CD4-positive, alpha-beta memory T cell (primary cell): ENCODE measurements at regions of chr4 and their contacts with region 1.

Region 1: DNA sequence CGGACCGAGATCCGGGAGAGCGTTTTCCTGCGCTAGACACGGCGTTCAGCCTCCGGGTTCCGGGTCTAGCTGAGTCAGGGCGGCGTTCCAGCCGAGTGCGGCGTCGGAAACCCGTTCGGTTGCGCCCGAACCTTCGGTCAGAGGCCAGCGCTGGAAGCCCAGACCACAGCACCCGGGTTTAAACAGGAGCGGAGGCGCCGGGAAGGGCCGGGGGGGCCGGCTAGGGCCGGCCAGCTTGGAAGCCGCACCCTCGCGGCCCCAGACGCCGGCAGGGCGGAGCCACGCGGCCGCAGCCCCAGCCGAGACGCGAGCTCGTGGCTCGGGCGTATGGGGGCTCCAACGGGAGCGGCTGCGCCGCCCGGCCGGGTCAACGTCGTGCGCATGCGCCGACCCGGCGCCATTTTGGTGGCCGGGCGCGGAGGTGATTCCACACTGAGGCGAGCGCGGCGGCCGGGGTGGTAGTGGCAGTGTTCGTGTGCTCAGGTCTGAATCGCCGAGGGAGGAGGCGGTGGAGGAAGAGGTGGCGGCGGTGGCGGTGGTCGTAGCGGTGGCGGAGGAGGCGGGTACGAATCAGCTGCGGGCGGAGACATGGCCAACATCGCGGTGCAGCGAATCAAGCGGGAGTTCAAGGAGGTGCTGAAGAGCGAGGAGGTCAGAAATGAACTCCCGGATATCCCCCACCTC is at the start of gene UBE2K:
- DNase-seq: peak; percentile 86 to 93 (median 91)
- H3K4me3 ChIP-seq: peak within 1 kb of the TSS; percentile 79 to 93
- H3K4me3 Mint-ChIP-seq: peak within 1 kb of the TSS; percentile 96 to 100 (median 98)
- H3K27ac ChIP-seq: peak within 1 kb of the TSS; percentile 88
- H3K27ac Mint-ChIP-seq: peak within 1 kb of the TSS; percentile 94 to 100 (median 99)
- H3K4me1 ChIP-seq: peaks cover 50% of the 10 kb centered on the region
- H3K4me1 Mint-ChIP-seq: peaks cover 27 to 54% (median 37%) of the 10 kb centered on the region in 4 donors
- H3K27me3 ChIP-seq: no peaks in the 10 kb centered on the region
- H3K27me3 Mint-ChIP-seq: no peaks in the 10 kb centered on the region
- total RNA-seq, gene UBE2K: 45.0 to 51.2 TPM

Region 2: DNA sequence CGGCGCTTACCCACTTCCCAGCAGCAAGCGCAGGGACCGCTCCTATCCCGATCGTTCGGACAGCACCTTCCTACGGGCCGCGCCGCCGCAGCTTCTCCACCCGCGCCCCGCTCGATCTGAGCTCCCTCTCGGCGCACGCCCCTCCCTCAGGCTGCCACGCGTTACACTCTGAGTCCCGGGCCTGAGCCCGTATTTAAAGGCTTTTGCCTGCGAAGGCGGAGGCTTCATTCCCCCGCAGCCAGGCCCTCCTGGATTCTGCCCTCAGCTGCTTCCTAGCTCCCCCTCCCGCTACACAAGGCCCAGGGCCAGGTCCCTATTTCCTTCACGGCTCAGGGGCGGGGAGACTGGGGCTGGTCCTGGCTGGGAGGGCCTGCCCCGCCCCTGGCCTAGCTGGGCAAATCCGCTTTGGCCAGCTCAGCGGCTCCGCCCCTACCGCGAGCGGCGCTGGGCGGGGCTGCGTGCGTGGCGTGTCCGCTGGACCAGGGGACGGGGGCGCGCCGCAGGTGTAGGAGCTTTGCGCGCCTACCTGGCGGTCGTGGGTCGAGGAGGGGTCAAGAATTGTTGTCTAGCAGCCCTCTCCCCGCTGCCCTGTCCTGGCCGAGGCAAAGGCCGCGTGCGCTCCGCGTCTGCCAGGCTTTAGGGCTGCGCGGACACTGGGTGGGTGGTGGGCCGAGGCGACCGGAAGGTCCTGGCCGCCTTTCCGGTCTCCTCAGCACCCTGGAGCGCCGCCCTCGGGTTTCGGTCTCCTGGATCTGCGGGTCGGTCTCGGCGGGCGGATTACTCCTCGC is 170.4 kb before region 1 on chr4 and contains the start of gene UGDH:
- CTCF ChIA-PET with region 1: no interaction called
- POLR2A ChIA-PET with region 1: interaction called, 11 read pairs
- intact Hi-C with region 1: loop called (anchors 1 kb)
- DNase-seq: peak; percentile 88 to 92 (median 90)
- H3K4me3 ChIP-seq: peak within 1 kb of the TSS; percentile 71 to 91
- H3K4me3 Mint-ChIP-seq: peak within 1 kb of the TSS; percentile 97 to 99 (median 98)
- H3K27ac ChIP-seq: peak within 1 kb of the TSS; percentile 69
- H3K27ac Mint-ChIP-seq: peak within 1 kb of the TSS; percentile 78 to 98 (median 96)
- H3K4me1 ChIP-seq: peaks cover 18% of the 10 kb centered on the region
- H3K4me1 Mint-ChIP-seq: peaks cover 10 to 25% (median 18%) of the 10 kb centered on the region in 4 donors
- H3K27me3 ChIP-seq: no peaks in the 10 kb centered on the region
- H3K27me3 Mint-ChIP-seq: no peaks in the 10 kb centered on the region
- total RNA-seq, gene UGDH: 21.6 to 26.5 TPM

Region 3: GRCh38 chr4:39638354-39639240 is 59.3 kb before region 1 on chr4 and contains the start of gene SMIM14:
- CTCF ChIA-PET with region 1: interaction called, 7 read pairs
- POLR2A ChIA-PET with region 1: interaction called, 15 read pairs
- intact Hi-C with region 1: loop called (anchors 2 kb)
- DNase-seq: peak; percentile 84 to 91 (median 86)
- H3K4me3 ChIP-seq: peak within 1 kb of the TSS; percentile 52 to 95
- H3K4me3 Mint-ChIP-seq: peak within 1 kb of the TSS; percentile 87 to 99 (median 92)
- H3K27ac ChIP-seq: peak within 1 kb of the TSS; percentile 77
- H3K27ac Mint-ChIP-seq: peak within 1 kb of the TSS; percentile 74 to 98 (median 96)
- H3K4me1 ChIP-seq: peaks cover 27% of the 10 kb centered on the region
- H3K4me1 Mint-ChIP-seq: peaks cover 20 to 54% (median 32%) of the 10 kb centered on the region in 4 donors
- H3K27me3 ChIP-seq: no peaks in the 10 kb centered on the region
- H3K27me3 Mint-ChIP-seq: no peaks in the 10 kb centered on the region
- total RNA-seq, gene SMIM14: 15.5 to 19.4 TPM

Region 4: DNA sequence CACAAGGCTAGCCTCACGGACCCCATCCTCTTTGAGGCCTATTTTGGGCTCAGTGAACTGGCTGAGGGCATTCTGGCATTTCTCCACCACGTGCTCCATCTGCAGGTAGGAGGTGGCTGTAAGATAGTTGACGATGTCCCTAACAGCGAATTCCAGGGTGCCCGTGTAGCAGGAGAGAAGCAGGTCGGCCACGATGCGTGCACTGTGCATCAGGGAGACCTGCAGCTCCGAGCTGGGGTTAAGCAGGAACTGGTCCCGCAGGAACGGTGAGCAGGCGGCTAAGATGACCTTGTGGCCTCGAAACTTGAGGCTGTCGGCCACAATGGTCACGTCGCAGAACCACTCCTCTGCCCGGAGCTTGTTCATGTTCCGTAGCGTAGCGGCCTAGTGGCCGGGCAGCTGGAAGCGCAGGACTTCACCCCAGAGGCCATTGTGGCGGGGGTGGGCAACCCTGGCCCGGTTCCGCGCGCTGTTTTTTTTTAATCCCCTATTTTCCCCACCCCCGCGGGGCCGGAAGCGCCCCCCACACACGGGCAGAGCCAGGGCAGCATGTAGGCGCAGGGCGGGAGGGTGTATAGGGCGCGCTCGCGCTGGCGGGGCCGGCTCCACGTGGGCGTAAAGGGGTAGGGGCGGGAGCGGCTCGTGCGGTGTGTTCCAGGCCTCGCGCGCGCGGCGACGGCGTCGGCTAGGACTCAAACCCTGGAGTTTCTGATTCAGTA is 73.3 kb after region 1 on chr4:
- CTCF ChIA-PET with region 1: no interaction called
- POLR2A ChIA-PET with region 1: no interaction called
- intact Hi-C with region 1: no loop called
- DNase-seq: no peak
- H3K4me3 ChIP-seq: no peak overlapping the region
- H3K4me3 Mint-ChIP-seq: no peak overlapping the region
- H3K27ac ChIP-seq: no peak overlapping the region
- H3K27ac Mint-ChIP-seq: no peak overlapping the region
- H3K4me1 ChIP-seq: no peaks in the 10 kb centered on the region
- H3K4me1 Mint-ChIP-seq: peaks cover 0 to 5% (median 0%) of the 10 kb centered on the region in 4 donors
- H3K27me3 ChIP-seq: no peaks in the 10 kb centered on the region
- H3K27me3 Mint-ChIP-seq: no peaks in the 10 kb centered on the region

Region 5: GRCh38 chr4:39873823-39874222 is 175.9 kb after region 1 on chr4:
- CTCF ChIA-PET with region 1: interaction called, 4 read pairs
- POLR2A ChIA-PET with region 1: interaction called, 4 read pairs
- intact Hi-C with region 1: loop called (anchors 5 kb)
- DNase-seq: peak in 1 of 5 donors; percentile 2
- H3K4me3 ChIP-seq: no peak overlapping the region
- H3K4me3 Mint-ChIP-seq: peak overlapping the region in 6 of 8 donors; percentile 13 to 42 (median 36)
- H3K27ac ChIP-seq: no peak overlapping the region
- H3K27ac Mint-ChIP-seq: peak overlapping the region in 6 of 7 donors; percentile 50 to 89 (median 78)
- H3K4me1 ChIP-seq: peaks cover 24% of the 10 kb centered on the region
- H3K4me1 Mint-ChIP-seq: peaks cover 14 to 28% (median 19%) of the 10 kb centered on the region in 4 donors
- H3K27me3 ChIP-seq: no peaks in the 10 kb centered on the region
- H3K27me3 Mint-ChIP-seq: no peaks in the 10 kb centered on the region

Region 6: DNA sequence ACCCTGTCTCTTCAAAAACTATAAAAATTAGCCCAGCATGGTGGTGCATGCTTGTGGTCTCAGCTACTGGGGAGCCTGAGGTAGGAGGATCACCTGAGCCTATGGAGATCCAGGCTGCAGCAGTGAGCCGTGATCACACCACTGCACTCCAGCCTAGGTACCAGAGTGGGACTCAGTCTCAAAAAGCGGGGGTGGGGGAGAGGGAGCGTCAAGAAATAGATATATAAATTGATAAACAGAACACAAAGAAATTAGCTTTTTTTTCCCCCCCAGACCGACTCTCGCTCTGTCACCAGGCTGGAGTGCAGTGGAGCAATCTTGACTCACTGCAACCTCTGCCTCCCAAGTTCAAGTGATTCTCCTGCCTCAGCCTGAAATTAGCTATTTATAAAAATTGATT is 265.8 kb after region 1 on chr4:
- CTCF ChIA-PET with region 1: no interaction called
- POLR2A ChIA-PET with region 1: no interaction called
- intact Hi-C with region 1: no loop called
- DNase-seq: no peak
- H3K4me3 ChIP-seq: no peak overlapping the region
- H3K4me3 Mint-ChIP-seq: no peak overlapping the region
- H3K27ac ChIP-seq: no peak overlapping the region
- H3K27ac Mint-ChIP-seq: no peak overlapping the region
- H3K4me1 ChIP-seq: peaks cover 40% of the 10 kb centered on the region
- H3K4me1 Mint-ChIP-seq: peaks cover 28 to 67% (median 42%) of the 10 kb centered on the region in 4 donors
- H3K27me3 ChIP-seq: no peaks in the 10 kb centered on the region
- H3K27me3 Mint-ChIP-seq: no peaks in the 10 kb centered on the region

Region 7: DNA sequence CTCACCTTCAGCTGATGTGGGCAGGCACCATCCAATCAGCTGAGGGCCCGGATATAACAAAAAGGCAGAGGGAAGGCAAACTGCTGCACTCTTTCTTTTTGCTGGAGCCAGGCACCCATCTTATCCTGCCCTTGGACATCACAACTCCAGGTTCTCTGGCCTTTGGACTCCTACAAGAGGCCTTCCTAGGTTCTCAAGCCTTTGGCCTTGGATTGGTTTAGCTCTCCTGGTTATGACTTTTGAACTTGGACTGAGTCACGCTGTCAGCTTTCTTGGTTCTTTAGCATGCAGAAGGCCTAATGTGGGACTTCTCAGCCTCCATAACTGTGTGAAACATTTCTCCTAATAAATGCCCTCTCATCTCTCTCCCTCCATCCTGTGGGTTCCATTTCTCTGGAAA is 335.7 kb after region 1 on chr4:
- CTCF ChIA-PET with region 1: no interaction called
- POLR2A ChIA-PET with region 1: no interaction called
- intact Hi-C with region 1: no loop called
- DNase-seq: no peak
- H3K4me3 ChIP-seq: no peak overlapping the region
- H3K4me3 Mint-ChIP-seq: no peak overlapping the region
- H3K27ac ChIP-seq: no peak overlapping the region
- H3K27ac Mint-ChIP-seq: no peak overlapping the region
- H3K4me1 ChIP-seq: no peaks in the 10 kb centered on the region
- H3K4me1 Mint-ChIP-seq: no peaks in the 10 kb centered on the region
- H3K27me3 ChIP-seq: no peaks in the 10 kb centered on the region
- H3K27me3 Mint-ChIP-seq: no peaks in the 10 kb centered on the region

Region 8: DNA sequence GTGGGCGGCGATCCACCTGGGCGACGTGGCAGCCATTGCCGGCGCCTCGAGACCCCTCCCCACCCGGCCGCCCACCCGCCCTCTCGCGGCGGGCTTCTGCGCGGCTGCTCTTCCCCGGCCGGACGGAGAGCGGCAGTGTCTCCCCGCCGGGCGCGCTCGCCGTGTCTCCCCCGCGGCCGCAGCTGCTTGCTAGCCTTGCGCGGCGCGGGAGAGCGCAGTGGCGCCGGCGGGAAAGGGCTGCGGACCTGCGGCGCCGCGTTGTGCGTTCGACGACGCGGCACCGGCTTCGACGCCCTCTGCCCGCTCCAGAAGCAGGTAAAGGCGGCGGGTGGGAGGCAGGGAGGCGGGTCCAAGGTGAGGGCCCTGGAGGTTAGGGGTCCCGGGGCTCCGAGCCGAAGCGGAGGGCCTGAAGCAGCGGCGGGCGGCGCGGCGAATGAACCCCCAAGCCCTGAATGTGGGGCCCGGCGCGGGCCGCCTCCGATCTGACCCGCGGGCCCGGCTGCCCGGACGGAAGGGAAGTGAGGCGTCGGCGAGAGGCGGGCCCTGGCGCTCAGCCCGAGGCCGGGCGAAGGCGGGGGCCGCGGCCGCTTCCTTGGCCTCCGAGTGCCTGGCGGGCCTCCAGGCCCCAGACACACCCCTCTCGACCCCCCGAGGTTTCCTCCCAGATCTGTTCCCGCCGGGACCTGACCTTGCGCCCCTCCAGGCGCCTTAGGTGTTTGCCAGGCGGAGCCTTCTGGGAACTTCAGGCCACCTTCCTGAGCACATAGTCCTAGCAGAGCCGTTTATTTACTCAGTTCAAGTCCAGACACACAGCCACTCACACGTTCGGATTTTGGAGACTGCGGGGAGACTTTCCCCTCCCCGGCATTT is 359.1 kb after region 1 on chr4 and contains the start of gene N4BP2:
- CTCF ChIA-PET with region 1: no interaction called
- POLR2A ChIA-PET with region 1: interaction called, 7 read pairs
- intact Hi-C with region 1: loop called (anchors 2 kb)
- DNase-seq: peak; percentile 60 to 78 (median 75)
- H3K4me3 ChIP-seq: peak within 1 kb of the TSS; percentile 82 to 100
- H3K4me3 Mint-ChIP-seq: peak within 1 kb of the TSS; percentile 93 to 99 (median 97)
- H3K27ac ChIP-seq: peak within 1 kb of the TSS; percentile 75
- H3K27ac Mint-ChIP-seq: peak within 1 kb of the TSS; percentile 93 to 99 (median 97)
- H3K4me1 ChIP-seq: peaks cover 36% of the 10 kb centered on the region
- H3K4me1 Mint-ChIP-seq: peaks cover 18 to 48% (median 32%) of the 10 kb centered on the region in 4 donors
- H3K27me3 ChIP-seq: no peaks in the 10 kb centered on the region
- H3K27me3 Mint-ChIP-seq: no peaks in the 10 kb centered on the region
- total RNA-seq, gene N4BP2: 15.0 to 16.7 TPM

Region 9: DNA sequence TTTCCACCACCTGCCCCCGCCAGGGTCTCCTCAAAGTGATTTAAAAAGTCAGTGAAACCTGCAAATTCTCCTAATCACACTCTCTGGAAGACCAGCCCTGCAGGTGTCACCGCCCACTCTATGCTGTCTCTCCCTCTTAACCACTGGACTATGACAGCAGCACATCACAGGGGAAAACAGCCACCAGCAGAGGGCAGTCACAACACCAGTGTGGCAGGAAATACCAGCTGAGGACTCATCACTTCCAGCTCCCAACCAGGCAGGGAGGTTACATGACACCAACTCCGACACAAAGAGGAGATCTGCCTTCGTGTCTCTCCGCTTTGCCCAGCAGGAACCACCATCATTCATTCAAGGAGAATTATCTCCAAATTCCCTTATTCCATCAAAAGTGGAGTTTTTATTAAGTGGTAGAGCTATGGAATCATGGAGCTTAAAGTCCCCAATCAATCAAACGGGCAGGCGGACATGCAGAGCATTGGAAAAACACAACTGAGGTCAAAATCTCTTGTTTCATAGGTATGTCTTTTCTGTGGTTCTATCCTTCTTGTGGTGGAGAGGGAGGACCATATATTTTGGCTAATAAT is 1143.2 kb after region 1 on chr4:
- CTCF ChIA-PET with region 1: no interaction called
- POLR2A ChIA-PET with region 1: no interaction called
- intact Hi-C with region 1: loop called (anchors 5 kb)
- DNase-seq: peak; percentile 23 to 45 (median 41)
- H3K4me3 ChIP-seq: no peak overlapping the region
- H3K4me3 Mint-ChIP-seq: no peak overlapping the region
- H3K27ac ChIP-seq: no peak overlapping the region
- H3K27ac Mint-ChIP-seq: peak overlapping the region in 1 of 7 donors; percentile 37
- H3K4me1 ChIP-seq: no peaks in the 10 kb centered on the region
- H3K4me1 Mint-ChIP-seq: no peaks in the 10 kb centered on the region
- H3K27me3 ChIP-seq: no peaks in the 10 kb centered on the region
- H3K27me3 Mint-ChIP-seq: peaks cover 6 to 8% of the 10 kb centered on the region in 2 donors